Aorta (tissue), 5 donors: ENCODE measurements at regions of chr6 and their contacts with region 1.

Region 1: GRCh38 chr6:158371261-158371660 is 59.0 kb downstream of the TULP4 start:
- DNase-seq: no peak
- ATAC-seq: no peak
- H3K4me3 ChIP-seq: no peak overlapping the region
- H3K27ac ChIP-seq: no peak overlapping the region
- H3K4me1 ChIP-seq: peaks cover 0 to 3% of the 10 kb centered on the region in 2 donors
- H3K27me3 ChIP-seq: no peaks in the 10 kb centered on the region

Region 2: GRCh38 chr6:158347335-158347734 is 23.9 kb before region 1 on chr6:
- intact Hi-C with region 1: loop called in 1 of 2 experiments (anchors 1 kb)
- DNase-seq: no peak
- ATAC-seq: no peak
- H3K4me3 ChIP-seq: no peak overlapping the region
- H3K27ac ChIP-seq: no peak overlapping the region
- H3K4me1 ChIP-seq: no peaks in the 10 kb centered on the region
- H3K27me3 ChIP-seq: no peaks in the 10 kb centered on the region